ENCODE measurements at regions of chr7 and their contacts with region 1.

Region 1: GRCh38 chr7:75066521-75066920 is 7.1 kb downstream of the RCC1L start:
- DNase-seq: no peak
- H3K4me3 ChIP-seq: no peak overlapping the region
- H3K4me3 Mint-ChIP-seq: no peak overlapping the region
- H3K27ac Mint-ChIP-seq: no peak overlapping the region
- H3K4me1 ChIP-seq: no peaks in the 10 kb centered on the region
- H3K4me1 Mint-ChIP-seq: no peaks in the 10 kb centered on the region
- H3K27me3 ChIP-seq: no peaks in the 10 kb centered on the region
- H3K27me3 Mint-ChIP-seq: no peaks in the 10 kb centered on the region
- CTCF ChIP-seq: no peak

Region 2: GRCh38 chr7:75650681-75651080 is 584.2 kb after region 1 on chr7:
- CTCF ChIA-PET with region 1: no interaction called
- POLR2A ChIA-PET with region 1: interaction called, 11 read pairs
- intact Hi-C with region 1: no loop called
- DNase-seq: no peak
- H3K4me3 ChIP-seq: no peak overlapping the region
- H3K4me3 Mint-ChIP-seq: no peak overlapping the region
- H3K27ac Mint-ChIP-seq: no peak overlapping the region
- H3K4me1 ChIP-seq: peaks cover 7% of the 10 kb centered on the region; the same call in 1 of the 2 replicates
- H3K4me1 Mint-ChIP-seq: peaks cover 5% of the 10 kb centered on the region
- H3K27me3 ChIP-seq: no peaks in the 10 kb centered on the region
- H3K27me3 Mint-ChIP-seq: no peaks in the 10 kb centered on the region
- CTCF ChIP-seq: no peak

Measured in Caco-2 (cell line).